ENCODE measurements at regions of chr20 and their contacts with region 1.

Region 1: GRCh38 chr20:41072190-41072863 is 43.7 kb downstream of the TOP1 start:
- DNase-seq: no peak
- H3K4me3 Mint-ChIP-seq: no peak overlapping the region
- H3K27ac Mint-ChIP-seq: peak overlapping the region; percentile 82
- H3K4me1 Mint-ChIP-seq: peaks cover 78% of the 10 kb centered on the region
- H3K27me3 Mint-ChIP-seq: no peaks in the 10 kb centered on the region

Region 2: DNA sequence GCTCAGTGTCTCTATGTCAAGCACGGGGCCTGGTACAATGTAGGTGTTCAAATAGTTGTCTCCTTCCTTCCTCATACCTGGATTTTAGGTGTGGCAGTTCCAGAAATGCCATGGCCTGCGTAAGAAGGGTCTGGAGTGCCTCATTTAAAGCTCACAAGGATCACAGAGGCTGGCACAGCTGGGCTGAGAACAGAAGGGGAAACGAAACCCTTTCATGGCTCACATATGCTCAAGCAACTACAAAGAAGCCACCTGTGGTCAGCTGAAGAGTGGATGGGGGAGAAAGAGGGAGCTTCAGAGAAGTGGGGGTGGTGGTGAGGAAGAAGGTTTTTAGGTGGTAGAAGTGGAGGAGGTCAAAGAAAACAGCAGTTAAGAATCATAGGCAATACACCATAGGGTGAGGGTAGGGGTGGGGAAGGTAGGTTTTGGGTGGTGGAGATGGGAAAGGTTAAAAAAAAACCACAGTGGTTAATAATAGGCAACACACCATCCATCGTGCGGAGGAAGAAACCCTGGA is 60.7 kb before region 1 on chr20:
- CTCF ChIA-PET with region 1: no interaction called
- intact Hi-C with region 1: no loop called
- DNase-seq: no peak
- H3K4me3 Mint-ChIP-seq: no peak overlapping the region
- H3K27ac Mint-ChIP-seq: no peak overlapping the region
- H3K4me1 Mint-ChIP-seq: peaks cover 25% of the 10 kb centered on the region
- H3K27me3 Mint-ChIP-seq: no peaks in the 10 kb centered on the region

Region 3: DNA sequence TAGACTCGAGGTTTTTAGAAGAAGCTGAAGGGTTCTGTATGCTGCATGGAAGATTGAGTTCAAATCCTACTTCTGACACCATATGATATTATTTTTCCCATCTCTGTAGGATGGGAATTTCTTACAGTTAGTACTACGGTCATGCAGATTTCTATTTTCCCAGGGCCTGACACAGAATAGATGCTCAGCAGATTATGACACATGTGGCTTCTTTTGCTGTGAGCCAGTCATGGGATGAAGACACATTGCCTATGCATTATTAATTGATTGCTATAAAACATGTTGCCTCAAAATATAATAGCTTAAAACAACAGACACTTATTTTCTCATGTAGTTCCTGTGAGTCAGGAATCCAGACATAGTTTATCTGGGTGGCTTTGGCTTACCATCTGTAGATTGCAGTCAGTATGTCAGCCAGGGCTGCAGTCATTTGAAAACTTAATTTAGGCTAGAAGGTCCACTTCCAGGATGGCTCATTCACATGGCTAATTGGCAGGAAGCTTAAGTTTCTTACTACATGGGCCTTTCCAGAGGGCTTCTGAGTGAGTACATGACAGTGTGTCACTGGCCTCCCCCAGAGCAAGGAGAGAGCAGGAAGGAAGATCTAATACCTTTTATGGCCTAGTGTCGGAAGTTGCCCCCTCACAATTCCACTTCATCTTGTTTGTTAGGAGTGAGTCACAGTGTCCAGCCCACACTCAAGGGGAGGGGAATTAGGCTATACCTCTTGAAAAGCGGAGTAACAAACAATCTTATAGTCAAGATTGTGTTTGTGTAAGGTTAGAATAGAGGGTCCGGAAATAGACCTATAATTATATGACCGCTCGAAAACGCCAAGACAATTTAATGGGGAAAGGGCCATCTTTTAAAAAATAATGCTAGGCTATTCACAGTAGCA is 14.1 kb before region 1 on chr20:
- CTCF ChIA-PET with region 1: interaction called, 4 read pairs
- intact Hi-C with region 1: loop called (anchors 2 kb)
- DNase-seq: peak; percentile 56
- H3K4me3 Mint-ChIP-seq: no peak overlapping the region
- H3K27ac Mint-ChIP-seq: peak overlapping the region; percentile 54
- H3K4me1 Mint-ChIP-seq: peaks cover 52% of the 10 kb centered on the region
- H3K27me3 Mint-ChIP-seq: no peaks in the 10 kb centered on the region

Region 4: GRCh38 chr20:41095110-41095969 is 23.0 kb after region 1 on chr20:
- CTCF ChIA-PET with region 1: interaction called, 17 read pairs
- intact Hi-C with region 1: no loop called
- DNase-seq: peak; percentile 70
- H3K4me3 Mint-ChIP-seq: no peak overlapping the region
- H3K27ac Mint-ChIP-seq: peak overlapping the region; percentile 61
- H3K4me1 Mint-ChIP-seq: peaks cover 14% of the 10 kb centered on the region
- H3K27me3 Mint-ChIP-seq: no peaks in the 10 kb centered on the region

Region 5: DNA sequence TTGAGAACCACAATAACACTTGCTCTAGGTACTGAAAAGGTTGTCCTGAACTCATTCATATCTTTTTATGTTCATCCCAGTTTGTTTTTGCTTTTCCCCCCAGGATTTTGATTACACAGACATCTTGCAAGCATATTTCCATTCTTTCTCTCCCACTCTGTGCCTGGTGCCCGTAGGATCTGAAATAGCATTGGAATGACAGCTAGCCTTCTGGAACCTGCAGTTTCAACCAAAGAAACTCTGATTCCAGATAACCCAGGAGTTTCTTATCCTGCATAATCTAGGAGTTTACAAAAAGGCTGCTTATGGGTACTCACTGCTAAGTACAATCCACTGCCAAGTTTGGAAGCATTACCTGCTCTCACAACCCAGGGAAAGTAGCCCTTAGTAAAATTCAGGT is 36.2 kb after region 1 on chr20:
- CTCF ChIA-PET with region 1: no interaction called
- intact Hi-C with region 1: no loop called
- DNase-seq: no peak
- H3K4me3 Mint-ChIP-seq: no peak overlapping the region
- H3K27ac Mint-ChIP-seq: no peak overlapping the region
- H3K4me1 Mint-ChIP-seq: no peaks in the 10 kb centered on the region
- H3K27me3 Mint-ChIP-seq: no peaks in the 10 kb centered on the region

Region 6: GRCh38 chr20:41476013-41476752 is 403.9 kb after region 1 on chr20:
- CTCF ChIA-PET with region 1: no interaction called
- intact Hi-C with region 1: no loop called
- DNase-seq: no peak
- H3K4me3 Mint-ChIP-seq: no peak overlapping the region
- H3K27ac Mint-ChIP-seq: no peak overlapping the region
- H3K4me1 Mint-ChIP-seq: peaks cover 22% of the 10 kb centered on the region
- H3K27me3 Mint-ChIP-seq: no peaks in the 10 kb centered on the region

Measured in activated naive CD4-positive, alpha-beta T cell treated with anti-CD3 and anti-CD28 coated beads for 36 hours (primary cell).